H1 (cell line): ENCODE measurements at regions of chr17 and their contacts with region 1.

Region 1: GRCh38 chr17:80008383-80008840 is 27.3 kb downstream of the TBC1D16 start:
- DNase-seq: peak; percentile 38 to 98
- H3K4me3 ChIP-seq: no peak overlapping the region
- H3K27ac ChIP-seq: no peak overlapping the region
- H3K4me1 ChIP-seq: peaks cover 0 to 8% (median 3%) of the 10 kb centered on the region in 4 experiments; a peak in 5 of 7 replicates
- H3K27me3 ChIP-seq: no peaks in the 10 kb centered on the region
- CTCF ChIP-seq: peak; percentile 92 to 98 (median 96)
- EP300 ChIP-seq: no peak
- POLR2A ChIP-seq: no peak
- RAD21 ChIP-seq: peak; percentile 65 to 76

Region 2: DNA sequence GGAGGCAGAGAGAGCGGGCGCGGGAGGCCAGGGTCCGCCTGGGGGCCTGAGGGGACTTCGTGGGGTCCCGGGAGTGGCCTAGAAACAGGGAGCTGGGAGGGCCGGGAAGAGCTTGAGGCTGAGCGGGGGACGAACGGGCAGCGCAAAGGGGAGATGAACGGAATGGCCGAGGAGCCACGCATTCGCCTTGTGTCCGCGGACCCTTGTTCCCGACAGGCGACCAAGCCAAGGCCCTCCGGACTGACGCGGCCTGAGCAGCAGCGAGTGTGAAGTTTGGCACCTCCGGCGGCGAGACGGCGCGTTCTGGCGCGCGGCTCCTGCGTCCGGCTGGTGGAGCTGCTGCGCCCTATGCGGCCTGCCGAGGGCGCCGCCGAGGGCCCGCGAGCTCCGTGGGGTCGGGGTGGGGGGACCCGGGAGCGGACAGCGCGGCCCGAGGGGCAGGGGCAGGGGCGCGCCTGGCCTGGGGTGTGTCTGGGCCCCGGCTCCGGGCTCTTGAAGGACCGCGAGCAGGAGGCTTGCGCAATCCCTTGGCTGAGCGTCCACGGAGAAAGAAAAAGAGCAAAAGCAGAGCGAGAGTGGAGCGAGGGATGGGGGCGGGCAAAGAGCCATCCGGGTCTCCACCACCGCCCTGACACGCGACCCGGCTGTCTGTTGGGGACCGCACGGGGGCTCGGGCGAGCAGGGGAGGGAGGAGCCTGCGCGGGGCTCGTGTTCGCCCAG is 168.0 kb before region 1 on chr17:
- CTCF ChIA-PET with region 1: no interaction called
- POLR2A ChIA-PET with region 1: no interaction called
- DNase-seq: peak in 1 of 2 experiments; percentile 67
- H3K4me3 ChIP-seq: peak overlapping the region in 2 of 4 experiments; percentile 26 to 57; a peak in 3 of 8 replicates
- H3K27ac ChIP-seq: no peak overlapping the region
- H3K4me1 ChIP-seq: peaks cover 3 to 48% (median 34%) of the 10 kb centered on the region in 4 experiments
- H3K27me3 ChIP-seq: peaks cover 62 to 85% (median 82%) of the 10 kb centered on the region in 4 experiments
- CTCF ChIP-seq: peak; percentile 45 to 64 (median 61)
- EP300 ChIP-seq: no peak
- POLR2A ChIP-seq: no peak
- RAD21 ChIP-seq: peak in 1 of 2 experiments; percentile 34; a peak in 1 of 4 replicates

Region 3: DNA sequence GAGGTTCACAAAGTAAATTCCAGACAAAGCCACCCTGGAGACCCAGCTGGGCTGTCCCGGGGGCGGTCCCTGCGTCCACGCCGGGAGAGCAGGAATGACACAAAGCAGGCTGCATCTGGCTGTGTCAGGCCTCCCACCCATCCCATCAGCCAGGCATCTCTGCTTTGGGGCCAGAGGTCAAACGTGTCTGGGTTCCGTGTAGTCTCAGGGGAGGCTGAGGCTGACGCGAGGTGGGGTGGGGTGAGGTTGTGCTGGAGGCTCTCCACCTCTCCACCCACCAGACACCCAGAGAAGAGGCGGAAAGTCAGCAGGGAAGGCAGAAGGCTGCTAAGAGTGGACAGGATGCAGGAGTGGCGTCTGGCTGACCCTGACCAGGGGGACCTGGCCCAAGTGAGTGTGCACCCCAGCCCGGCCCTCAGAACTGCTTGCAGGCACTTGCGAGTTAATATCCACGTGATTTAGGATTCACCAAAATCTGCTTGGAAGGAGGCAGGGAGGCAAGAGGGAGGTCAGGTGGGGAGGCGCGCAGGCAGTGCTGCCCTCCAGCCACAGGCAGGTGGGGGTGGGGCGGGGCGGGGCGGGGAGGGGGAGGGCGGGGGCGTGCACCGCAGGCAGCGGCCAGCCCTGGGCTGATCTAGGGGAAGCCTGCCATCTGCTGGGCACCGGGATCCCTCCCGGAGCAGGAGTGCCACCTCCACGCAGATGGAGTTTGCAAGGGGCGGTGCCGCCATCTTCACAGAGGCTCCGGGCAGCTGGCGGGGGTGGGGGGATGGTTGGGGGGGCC is 17.1 kb before region 1 on chr17:
- CTCF ChIA-PET with region 1: interaction called, 53 read pairs
- POLR2A ChIA-PET with region 1: interaction called, 20 read pairs
- DNase-seq: peak; percentile 44 to 90
- H3K4me3 ChIP-seq: peak overlapping the region in 1 of 4 experiments; percentile 55; a peak in 3 of 8 replicates
- H3K27ac ChIP-seq: peak overlapping the region; percentile 53; the same call in 1 of the 2 replicates
- H3K4me1 ChIP-seq: peaks cover 15 to 37% (median 28%) of the 10 kb centered on the region in 4 experiments
- H3K27me3 ChIP-seq: peaks cover 0 to 2% (median 0%) of the 10 kb centered on the region in 4 experiments; a peak in 2 of 7 replicates
- CTCF ChIP-seq: peak; percentile 60 to 86 (median 75)
- EP300 ChIP-seq: no peak
- POLR2A ChIP-seq: no peak
- RAD21 ChIP-seq: peak; percentile 64 to 74

Region 4: DNA sequence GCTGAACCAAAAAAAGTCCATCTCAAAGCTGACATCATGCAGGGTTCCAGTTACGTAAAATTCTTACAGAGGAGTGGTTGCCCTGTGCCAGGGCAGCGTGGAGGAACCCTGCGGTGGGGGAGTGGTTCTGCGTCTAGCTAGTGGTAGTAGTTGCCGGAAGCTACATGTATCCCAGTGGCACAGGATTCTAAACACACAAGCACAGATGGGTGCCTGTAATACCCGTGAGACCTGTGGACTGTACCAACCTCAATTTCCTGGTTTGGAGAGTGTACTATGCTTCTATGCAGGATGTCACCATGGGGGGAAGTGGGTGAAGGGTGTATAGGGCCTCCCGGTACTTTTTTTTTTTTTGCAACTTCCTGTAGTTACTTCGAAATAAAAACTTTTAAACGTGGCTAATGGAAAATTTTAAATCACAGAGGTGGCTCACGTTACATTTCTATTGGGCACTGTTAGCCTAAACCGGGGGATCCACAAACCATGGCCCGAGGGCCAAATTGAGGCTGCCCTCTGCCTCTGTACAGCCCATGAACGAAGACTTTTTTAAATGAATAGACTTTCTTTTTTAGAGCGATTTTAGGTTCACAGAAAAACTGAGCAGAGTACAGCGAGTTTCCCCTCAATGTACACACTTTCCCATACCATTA is 11.3 kb before region 1 on chr17:
- CTCF ChIA-PET with region 1: interaction called, 53 read pairs
- POLR2A ChIA-PET with region 1: interaction called, 20 read pairs
- DNase-seq: no peak
- H3K4me3 ChIP-seq: no peak overlapping the region
- H3K27ac ChIP-seq: no peak overlapping the region
- H3K4me1 ChIP-seq: peaks cover 10 to 18% (median 15%) of the 10 kb centered on the region in 4 experiments; a peak in 6 of 7 replicates
- H3K27me3 ChIP-seq: no peaks in the 10 kb centered on the region
- CTCF ChIP-seq: no peak
- EP300 ChIP-seq: no peak
- POLR2A ChIP-seq: no peak
- RAD21 ChIP-seq: no peak

Region 5: GRCh38 chr17:80023481-80024205 is 15.2 kb after region 1 on chr17:
- CTCF ChIA-PET with region 1: interaction called, 110 read pairs
- POLR2A ChIA-PET with region 1: interaction called, 34 read pairs
- DNase-seq: no peak
- H3K4me3 ChIP-seq: no peak overlapping the region
- H3K27ac ChIP-seq: no peak overlapping the region
- H3K4me1 ChIP-seq: peaks cover 0 to 5% (median 0%) of the 10 kb centered on the region in 4 experiments; a peak in 5 of 7 replicates
- H3K27me3 ChIP-seq: no peaks in the 10 kb centered on the region; a peak in 1 of 7 replicates
- CTCF ChIP-seq: no peak
- EP300 ChIP-seq: no peak
- POLR2A ChIP-seq: no peak
- RAD21 ChIP-seq: no peak

Region 6: GRCh38 chr17:80029258-80029974 is 21.0 kb after region 1 on chr17:
- CTCF ChIA-PET with region 1: interaction called, 110 read pairs
- POLR2A ChIA-PET with region 1: interaction called, 34 read pairs
- DNase-seq: no peak
- H3K4me3 ChIP-seq: no peak overlapping the region
- H3K27ac ChIP-seq: no peak overlapping the region
- H3K4me1 ChIP-seq: peaks cover 0 to 10% (median 4%) of the 10 kb centered on the region in 4 experiments; a peak in 6 of 7 replicates
- H3K27me3 ChIP-seq: no peaks in the 10 kb centered on the region; a peak in 1 of 7 replicates
- CTCF ChIP-seq: no peak
- EP300 ChIP-seq: no peak
- POLR2A ChIP-seq: no peak
- RAD21 ChIP-seq: no peak

Region 7: GRCh38 chr17:80035943-80036714 is 27.7 kb after region 1 on chr17 and contains the start of gene CCDC40:
- CTCF ChIA-PET with region 1: interaction called, 110 read pairs
- POLR2A ChIA-PET with region 1: interaction called, 15 read pairs
- DNase-seq: peak in 1 of 2 experiments; percentile 91
- H3K4me3 ChIP-seq: peak within 1 kb of the TSS; percentile 61 to 89 (median 78)
- H3K27ac ChIP-seq: peak within 1 kb of the TSS; percentile 87
- H3K4me1 ChIP-seq: peaks cover 0 to 3% (median 1%) of the 10 kb centered on the region in 4 experiments; a peak in 3 of 7 replicates
- H3K27me3 ChIP-seq: no peaks in the 10 kb centered on the region
- CTCF ChIP-seq: no peak
- EP300 ChIP-seq: no peak
- POLR2A ChIP-seq: peak; percentile 50 to 86
- RAD21 ChIP-seq: no peak
- total RNA-seq, gene CCDC40: 11.5 and 11.6 TPM in 2 replicates

Region 8: DNA sequence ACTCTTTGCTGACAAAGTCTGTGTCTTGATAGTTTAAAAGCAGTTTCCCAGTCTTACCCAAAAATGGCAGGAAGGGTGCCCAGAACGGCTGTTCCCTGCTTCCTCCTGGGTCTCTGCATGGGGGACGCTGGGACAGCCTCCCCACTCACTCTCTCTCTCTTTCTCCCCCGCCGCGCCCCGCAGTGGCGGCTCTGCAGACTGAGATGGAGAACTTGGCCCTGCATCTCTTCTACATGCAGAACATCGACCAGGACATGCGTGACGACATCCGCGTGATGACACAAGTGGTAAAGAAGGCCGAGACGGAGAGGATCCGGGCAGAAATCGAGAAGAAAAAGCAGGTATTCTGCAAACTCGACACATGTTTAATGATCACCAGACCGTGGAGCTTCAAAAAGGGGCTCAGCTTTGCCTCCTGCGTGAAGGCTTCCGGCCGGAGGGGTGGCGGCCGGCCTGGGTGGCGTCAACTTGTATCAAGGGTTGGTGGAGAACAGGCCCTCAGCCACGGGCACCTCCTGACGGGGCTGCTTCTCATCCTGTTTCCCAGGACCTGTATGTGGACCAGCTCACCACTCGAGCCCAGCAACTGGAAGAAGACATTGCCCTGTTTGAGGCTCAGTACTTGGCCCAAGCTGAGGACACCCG is 50.0 kb after region 1 on chr17:
- CTCF ChIA-PET with region 1: interaction called, 13 read pairs
- POLR2A ChIA-PET with region 1: no interaction called
- DNase-seq: no peak
- H3K4me3 ChIP-seq: no peak overlapping the region
- H3K27ac ChIP-seq: no peak overlapping the region
- H3K4me1 ChIP-seq: no peaks in the 10 kb centered on the region
- H3K27me3 ChIP-seq: no peaks in the 10 kb centered on the region
- CTCF ChIP-seq: no peak
- EP300 ChIP-seq: no peak
- POLR2A ChIP-seq: no peak
- RAD21 ChIP-seq: no peak

Region 9: DNA sequence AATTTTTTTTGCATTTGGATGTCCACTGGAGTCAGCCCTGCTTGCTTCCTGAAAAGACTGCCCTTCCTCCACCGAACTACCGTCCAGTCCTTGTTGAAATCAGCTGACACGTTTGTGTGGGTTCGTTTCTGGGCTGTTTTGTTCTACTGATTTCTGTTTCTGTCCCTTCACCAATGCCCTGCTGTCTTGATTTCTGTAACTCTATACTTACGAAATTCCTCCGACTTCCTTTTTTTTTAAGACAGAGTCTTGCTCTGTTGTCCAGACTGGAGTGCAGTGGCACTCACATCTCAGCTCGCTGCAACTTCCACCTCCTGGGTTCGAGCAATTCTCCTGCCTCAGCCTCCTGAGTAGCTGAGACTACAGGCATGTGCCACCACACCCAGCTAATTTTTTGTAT is 84.5 kb after region 1 on chr17:
- CTCF ChIA-PET with region 1: no interaction called
- POLR2A ChIA-PET with region 1: no interaction called
- DNase-seq: no peak
- H3K4me3 ChIP-seq: no peak overlapping the region
- H3K27ac ChIP-seq: no peak overlapping the region
- H3K4me1 ChIP-seq: no peaks in the 10 kb centered on the region; a peak in 1 of 7 replicates
- H3K27me3 ChIP-seq: no peaks in the 10 kb centered on the region
- CTCF ChIP-seq: no peak
- EP300 ChIP-seq: no peak
- POLR2A ChIP-seq: no peak
- RAD21 ChIP-seq: no peak

Region 10: DNA sequence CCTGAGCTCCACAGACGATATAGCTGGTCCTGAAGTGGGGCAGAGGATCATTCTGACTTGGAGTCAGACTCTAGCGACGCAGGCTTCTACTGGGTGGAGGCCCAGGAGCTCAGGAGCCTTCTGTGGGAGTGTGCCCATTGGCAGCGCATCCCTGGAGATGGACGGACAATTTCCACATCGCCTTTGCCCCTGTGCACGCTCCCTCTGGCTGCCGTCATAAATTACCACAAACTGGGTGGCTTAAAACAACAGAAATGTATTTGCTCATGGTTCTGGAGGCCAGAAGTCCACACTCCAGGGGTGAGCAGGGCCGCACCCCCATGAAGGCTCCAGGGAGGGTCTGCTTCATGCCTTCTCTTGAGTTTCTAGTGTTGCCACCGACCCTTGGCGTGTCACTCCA is 168.3 kb after region 1 on chr17:
- CTCF ChIA-PET with region 1: no interaction called
- POLR2A ChIA-PET with region 1: no interaction called
- DNase-seq: no peak
- H3K4me3 ChIP-seq: no peak overlapping the region
- H3K27ac ChIP-seq: no peak overlapping the region
- H3K4me1 ChIP-seq: peaks cover 0 to 3% (median under 1%) of the 10 kb centered on the region in 4 experiments; a peak in 2 of 7 replicates
- H3K27me3 ChIP-seq: no peaks in the 10 kb centered on the region
- CTCF ChIP-seq: no peak
- EP300 ChIP-seq: no peak
- POLR2A ChIP-seq: no peak
- RAD21 ChIP-seq: no peak